GM12878 (cell line): ENCODE measurements at regions of chr13 and their contacts with region 1.

Region 1: GRCh38 chr13:99501184-99501847 is at the start of gene TM9SF2:
- DNase-seq: peak; percentile 90
- ATAC-seq: peak; percentile 72
- H3K4me3 ChIP-seq: peak within 1 kb of the TSS; percentile 93
- H3K27ac ChIP-seq: peak within 1 kb of the TSS; percentile 91
- H3K4me1 ChIP-seq: peaks cover 12% of the 10 kb centered on the region
- H3K27me3 ChIP-seq: no peaks in the 10 kb centered on the region
- CTCF ChIP-seq: no peak
- EP300 ChIP-seq: no peak
- POLR2A ChIP-seq: peak; percentile 77
- RAD21 ChIP-seq: no peak
- polyA plus RNA-seq, gene TM9SF2: 34.6 to 42.5 TPM

Region 2: DNA sequence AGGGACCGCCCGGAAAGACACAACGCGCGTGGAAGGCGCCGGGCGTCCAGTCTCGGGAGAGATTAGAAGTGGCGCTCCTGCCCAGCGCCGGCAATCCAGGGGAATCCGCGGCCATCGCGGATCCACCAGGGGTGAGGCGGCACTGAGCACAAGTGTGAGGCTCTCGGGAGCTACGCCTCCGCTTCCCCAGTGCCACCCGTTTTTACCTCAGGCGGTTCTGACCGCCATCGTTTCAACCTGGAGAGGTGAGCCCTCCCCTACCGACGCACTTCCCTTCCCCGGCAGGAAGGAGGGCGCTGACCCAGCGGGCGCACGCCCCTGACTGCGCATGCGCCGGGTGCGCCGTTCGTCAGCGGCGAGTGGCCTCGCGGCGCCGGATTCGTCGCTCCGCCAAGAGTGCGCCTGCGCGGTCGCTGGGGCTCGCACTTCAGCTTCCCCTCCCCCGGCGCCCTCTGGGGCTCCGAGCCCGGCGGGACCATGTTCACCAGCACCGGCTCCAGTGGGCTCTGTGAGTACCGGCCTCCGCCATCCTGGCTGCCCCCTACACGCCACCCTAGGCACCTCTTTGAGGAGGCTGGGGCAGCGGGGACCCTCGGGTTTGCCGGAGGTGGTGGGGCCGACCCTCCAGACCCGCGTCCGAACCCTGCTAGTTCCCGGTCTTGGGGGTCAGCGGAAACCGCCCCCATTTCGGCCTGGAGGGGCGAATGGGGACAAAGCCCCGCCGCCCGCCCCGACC is 300.7 kb before region 1 on chr13 and contains the start of gene UBAC2:
- CTCF ChIA-PET with region 1: interaction called, 4 read pairs
- POLR2A ChIA-PET with region 1: no interaction called
- RAD21 ChIA-PET with region 1: no interaction called
- SMC1A ChIA-PET with region 1: interaction called, 3 read pairs
- in situ Hi-C with region 1: no loop called
- intact Hi-C with region 1: loop called (anchors 5 kb)
- DNase-seq: peak; percentile 89
- ATAC-seq: peak; percentile 86
- H3K4me3 ChIP-seq: peak within 1 kb of the TSS; percentile 94
- H3K27ac ChIP-seq: peak within 1 kb of the TSS; percentile 84
- H3K4me1 ChIP-seq: peaks cover 29% of the 10 kb centered on the region
- H3K27me3 ChIP-seq: no peaks in the 10 kb centered on the region
- CTCF ChIP-seq: 0 out of 6 replicates have a peak, but pooled peaks of 1 of the 3 experiments have one; percentile 2
- EP300 ChIP-seq: 0 out of 4 replicates have a peak, but pooled peaks of 1 of the 2 experiments have one; percentile 7
- POLR2A ChIP-seq: peak; percentile 100
- RAD21 ChIP-seq: no peak
- polyA plus RNA-seq, gene UBAC2: 3.0 to 4.1 TPM

Region 3: GRCh38 chr13:99374994-99375737 is 126.2 kb before region 1 on chr13:
- CTCF ChIA-PET with region 1: interaction called, 3 read pairs
- POLR2A ChIA-PET with region 1: no interaction called
- RAD21 ChIA-PET with region 1: interaction called, 3 read pairs
- SMC1A ChIA-PET with region 1: interaction called, 3 read pairs
- in situ Hi-C with region 1: no loop called
- intact Hi-C with region 1: loop called (anchors 5 kb)
- DNase-seq: no peak
- ATAC-seq: peak; percentile 83
- H3K4me3 ChIP-seq: peak overlapping the region; percentile 33; the same call in 1 of the 2 replicates
- H3K27ac ChIP-seq: peak overlapping the region; percentile 94
- H3K4me1 ChIP-seq: peaks cover 66% of the 10 kb centered on the region
- H3K27me3 ChIP-seq: no peaks in the 10 kb centered on the region
- CTCF ChIP-seq: 0 out of 6 replicates have a peak, but pooled peaks of 1 of the 3 experiments have one; percentile 0
- EP300 ChIP-seq: peak; percentile 85 to 91; a peak in 3 of 4 replicates
- POLR2A ChIP-seq: 0 out of 2 replicates have a peak, but pooled peaks have one; percentile 24
- RAD21 ChIP-seq: no peak

Region 4: GRCh38 chr13:99448546-99448945 is 52.8 kb before region 1 on chr13:
- CTCF ChIA-PET with region 1: interaction called, 44 read pairs
- POLR2A ChIA-PET with region 1: interaction called, 5 read pairs
- RAD21 ChIA-PET with region 1: interaction called, 30 read pairs
- SMC1A ChIA-PET with region 1: interaction called, 32 read pairs
- in situ Hi-C with region 1: no loop called
- intact Hi-C with region 1: loop called (anchors 2 kb)
- DNase-seq: no peak
- ATAC-seq: no peak
- H3K4me3 ChIP-seq: no peak overlapping the region
- H3K27ac ChIP-seq: no peak overlapping the region
- H3K4me1 ChIP-seq: no peaks in the 10 kb centered on the region; the same call in 1 of the 2 replicates
- H3K27me3 ChIP-seq: no peaks in the 10 kb centered on the region
- CTCF ChIP-seq: no peak
- EP300 ChIP-seq: no peak
- POLR2A ChIP-seq: no peak
- RAD21 ChIP-seq: no peak

Region 5: DNA sequence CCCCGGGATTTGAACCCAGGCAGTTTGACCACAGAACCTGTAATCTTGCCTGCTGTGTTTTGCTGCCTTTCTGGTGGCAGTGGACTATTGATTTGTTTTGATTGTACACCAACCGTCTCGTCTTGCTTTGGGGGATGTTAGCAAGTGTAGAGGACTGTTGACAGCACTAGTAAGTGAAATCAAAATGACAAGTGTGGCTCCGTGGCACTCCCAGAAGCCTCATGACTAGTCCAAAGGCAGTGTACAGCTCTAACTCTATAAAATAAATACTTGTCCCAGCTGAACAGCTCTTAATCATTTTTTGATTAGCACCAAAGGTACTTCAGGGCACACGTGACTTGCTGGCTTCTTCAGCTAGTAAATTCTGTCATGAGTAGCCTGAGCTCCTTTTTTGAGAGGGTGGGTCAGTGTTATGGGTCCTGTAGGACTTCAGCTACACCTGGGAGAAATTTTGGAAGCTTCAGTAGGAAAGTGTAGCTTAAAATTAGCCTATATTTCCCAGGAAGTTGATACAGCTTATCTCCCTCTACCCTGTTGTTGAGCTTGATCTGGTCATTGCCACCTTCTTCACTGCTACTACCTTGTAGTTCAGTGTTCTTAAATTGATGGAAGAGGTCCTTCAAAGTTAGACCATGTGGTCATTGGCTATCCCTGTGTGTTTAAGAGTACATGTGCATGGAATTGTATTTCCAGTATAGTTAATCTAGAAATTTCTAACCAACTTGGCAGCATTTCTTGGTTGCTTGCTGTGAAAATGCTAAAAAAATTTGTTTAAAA is 15.0 kb after region 1 on chr13:
- CTCF ChIA-PET with region 1: interaction called, 28 read pairs
- POLR2A ChIA-PET with region 1: interaction called, 3 read pairs
- RAD21 ChIA-PET with region 1: interaction called, 5 read pairs
- SMC1A ChIA-PET with region 1: interaction called, 12 read pairs
- in situ Hi-C with region 1: no loop called
- intact Hi-C with region 1: no loop called
- DNase-seq: no peak
- ATAC-seq: no peak
- H3K4me3 ChIP-seq: no peak overlapping the region
- H3K27ac ChIP-seq: no peak overlapping the region
- H3K4me1 ChIP-seq: no peaks in the 10 kb centered on the region; the same call in 1 of the 2 replicates
- H3K27me3 ChIP-seq: no peaks in the 10 kb centered on the region
- CTCF ChIP-seq: no peak
- EP300 ChIP-seq: no peak
- POLR2A ChIP-seq: no peak
- RAD21 ChIP-seq: no peak

Region 6: GRCh38 chr13:99542788-99543406 is 41.6 kb after region 1 on chr13:
- CTCF ChIA-PET with region 1: interaction called, 11 read pairs
- POLR2A ChIA-PET with region 1: interaction called, 3 read pairs
- RAD21 ChIA-PET with region 1: interaction called, 3 read pairs
- SMC1A ChIA-PET with region 1: interaction called, 7 read pairs
- in situ Hi-C with region 1: no loop called
- intact Hi-C with region 1: loop called (anchors 2 kb)
- DNase-seq: peak; percentile 92
- ATAC-seq: peak; percentile 99
- H3K4me3 ChIP-seq: no peak overlapping the region; the same call in 1 of the 2 replicates
- H3K27ac ChIP-seq: peak overlapping the region; percentile 49
- H3K4me1 ChIP-seq: peaks cover 51% of the 10 kb centered on the region
- H3K27me3 ChIP-seq: no peaks in the 10 kb centered on the region
- CTCF ChIP-seq: no peak
- EP300 ChIP-seq: peak; percentile 80 to 97
- POLR2A ChIP-seq: peak; percentile 50; the same call in 1 of the 2 replicates
- RAD21 ChIP-seq: no peak

Region 7: GRCh38 chr13:99834246-99834645 is 332.9 kb after region 1 on chr13:
- CTCF ChIA-PET with region 1: no interaction called
- POLR2A ChIA-PET with region 1: no interaction called
- RAD21 ChIA-PET with region 1: no interaction called
- SMC1A ChIA-PET with region 1: no interaction called
- in situ Hi-C with region 1: no loop called
- intact Hi-C with region 1: no loop called
- DNase-seq: no peak
- ATAC-seq: no peak
- H3K4me3 ChIP-seq: no peak overlapping the region
- H3K27ac ChIP-seq: no peak overlapping the region
- H3K4me1 ChIP-seq: no peaks in the 10 kb centered on the region
- H3K27me3 ChIP-seq: no peaks in the 10 kb centered on the region
- CTCF ChIP-seq: no peak
- EP300 ChIP-seq: no peak
- POLR2A ChIP-seq: no peak
- RAD21 ChIP-seq: no peak